Cardiac septum (tissue), 1 donor: ENCODE measurements at regions of chr14 and their contacts with region 1.

Region 1: DNA sequence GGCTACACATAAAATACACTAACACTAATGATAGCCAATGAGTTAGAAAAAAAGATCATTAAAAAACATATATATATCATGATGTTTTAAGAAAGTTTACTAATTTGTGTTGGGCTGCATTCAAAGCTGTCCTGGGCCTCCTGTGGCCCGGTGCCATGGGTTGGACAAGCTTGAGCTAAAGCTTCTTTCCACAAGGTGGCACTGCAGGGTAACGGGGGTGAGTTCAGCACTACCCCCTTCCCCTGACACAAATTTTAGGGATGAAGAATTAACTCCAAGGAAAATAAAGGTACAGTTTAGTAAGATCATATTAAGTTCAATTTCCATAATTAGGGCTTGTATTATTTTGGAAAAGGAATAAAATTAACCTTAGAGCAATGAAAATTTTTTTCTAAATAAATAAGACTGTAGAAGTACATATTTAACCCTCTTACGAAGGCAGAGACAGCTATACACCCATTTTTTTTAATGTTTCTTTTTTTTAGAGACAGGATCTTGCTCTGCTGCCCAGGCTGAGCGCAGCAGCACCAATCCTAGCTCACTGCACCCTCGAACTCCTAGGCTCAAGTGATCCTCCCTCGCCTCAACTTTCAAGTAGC is 38.9 kb downstream of the PPP1R13B start:
- DNase-seq: peak; percentile 81

Region 2: DNA sequence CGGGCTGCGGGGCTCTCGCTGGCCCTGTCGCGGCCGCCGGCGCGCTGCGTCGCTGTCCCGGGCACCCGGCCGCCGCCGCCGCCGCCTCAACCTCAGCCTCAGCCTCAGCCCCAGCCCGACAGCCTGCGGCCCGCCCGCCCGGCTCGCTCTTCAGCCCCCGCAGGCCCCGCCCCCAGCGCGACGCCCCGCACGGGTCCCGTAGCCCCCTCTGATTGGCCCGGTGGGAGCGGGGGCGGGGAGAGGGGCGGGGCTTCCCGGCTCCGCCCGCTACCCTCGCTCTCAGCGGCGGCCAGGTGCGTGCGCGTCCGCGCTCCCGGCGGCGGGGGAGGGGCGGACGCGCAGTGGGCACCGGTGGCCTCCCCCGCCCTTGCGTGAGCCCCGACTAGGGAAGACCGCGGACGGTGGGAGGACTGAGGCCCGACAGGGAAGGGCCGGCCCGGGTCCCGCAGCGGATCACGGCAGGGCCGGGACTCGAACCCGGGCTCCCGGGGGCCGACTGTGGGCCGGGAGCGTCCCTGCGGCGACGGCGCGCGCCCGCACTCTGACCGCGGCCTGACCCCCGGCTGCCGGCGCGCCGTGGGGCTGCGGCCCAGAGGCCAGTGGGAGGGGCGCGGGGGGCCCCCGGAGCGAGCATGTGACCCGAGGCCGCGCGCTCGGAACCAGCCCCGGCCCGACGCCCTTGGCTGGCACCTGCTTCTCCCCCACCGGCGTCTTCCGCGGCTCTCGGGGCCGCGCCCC is 39.1 kb after region 1 on chr14 and contains the start of gene PPP1R13B:
- intact Hi-C with region 1: loop called (anchors 5 kb)
- DNase-seq: peak; percentile 96
- total RNA-seq, gene PPP1R13B: 67.8 TPM

Region 3: DNA sequence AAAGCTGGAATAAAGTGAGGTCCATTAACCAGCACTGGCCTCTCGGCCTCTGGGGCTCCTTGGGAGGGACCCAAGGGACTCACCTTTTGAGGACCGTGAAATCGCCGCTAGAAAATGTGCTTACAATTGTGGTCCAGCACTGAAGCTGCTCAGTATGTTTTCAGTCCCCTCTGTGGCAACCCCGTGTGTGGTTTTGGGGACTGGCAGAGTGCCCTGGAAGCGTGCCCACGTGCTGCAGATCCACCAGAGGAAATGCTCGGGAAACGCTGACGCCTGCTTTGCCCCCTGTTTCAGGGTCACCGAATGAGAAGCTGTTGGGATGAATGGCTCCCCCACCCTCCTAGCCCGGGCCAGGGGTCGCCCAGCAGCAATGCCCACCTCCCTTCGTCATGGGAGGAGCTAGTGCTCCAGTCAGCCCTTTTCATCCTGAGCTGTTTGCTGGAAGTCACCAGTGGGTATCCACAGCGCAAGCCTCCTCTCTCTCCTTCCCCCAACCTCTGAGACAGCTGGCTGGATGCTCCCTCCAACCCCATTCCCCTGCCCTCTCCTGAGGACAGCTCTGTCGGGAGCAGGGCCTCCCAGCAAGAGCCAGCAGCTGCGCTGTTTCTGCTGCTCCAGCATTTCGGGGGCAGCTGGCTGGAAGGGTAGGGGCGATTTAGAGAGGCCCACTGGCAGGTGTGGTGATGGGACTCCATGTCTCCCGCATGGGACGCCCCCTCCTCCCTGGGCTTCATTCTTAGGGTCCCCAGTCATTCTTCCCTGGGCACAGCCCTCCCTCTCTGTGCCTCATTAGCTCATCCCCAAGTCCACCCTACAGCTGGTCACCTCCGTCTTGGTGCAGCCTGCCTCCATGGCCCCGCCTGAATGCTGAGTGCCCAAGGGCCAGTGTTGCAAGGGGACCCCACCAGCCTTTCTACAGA is 72.1 kb after region 1 on chr14:
- intact Hi-C with region 1: loop called (anchors 2 kb)
- DNase-seq: no peak

Region 4: DNA sequence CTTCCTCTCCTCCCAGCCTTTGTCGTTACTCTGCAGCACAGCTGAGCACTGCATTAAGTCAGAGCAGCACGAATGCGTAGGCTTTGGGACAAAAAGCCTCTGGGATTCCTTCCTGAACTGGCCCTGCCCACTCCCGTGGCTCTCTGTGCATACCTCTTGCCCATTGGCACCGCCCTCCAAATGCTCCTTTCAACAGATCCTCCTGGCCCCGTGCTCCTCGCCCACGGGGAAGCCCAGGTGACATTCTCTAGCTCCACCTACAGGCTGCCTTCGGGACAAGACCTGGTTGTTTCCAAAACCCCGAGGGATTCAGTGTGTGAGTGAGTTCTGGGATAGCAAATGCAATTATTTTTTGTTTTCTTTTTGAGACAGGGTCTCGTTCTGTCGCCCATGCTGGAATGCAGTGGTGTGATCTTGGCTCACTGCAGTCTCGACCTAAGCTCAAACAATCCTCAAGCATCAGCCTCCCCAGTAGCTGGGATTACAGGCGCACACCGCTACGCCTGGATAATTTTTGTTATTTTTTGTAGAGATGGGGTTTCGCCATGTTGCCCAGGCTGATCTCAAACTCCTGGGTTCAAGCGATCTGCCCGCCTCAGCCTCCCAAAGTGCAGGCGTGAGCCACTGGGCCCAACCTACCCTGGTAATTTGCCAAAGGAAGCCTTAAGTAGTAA is 101.9 kb after region 1 on chr14:
- intact Hi-C with region 1: loop called (anchors 1 kb)
- DNase-seq: peak; percentile 90

Region 5: GRCh38 chr14:103984196-103984595 is 175.7 kb after region 1 on chr14:
- intact Hi-C with region 1: loop called (anchors 5 kb)
- DNase-seq: no peak

Region 6: GRCh38 chr14:104306068-104307010 is 497.8 kb after region 1 on chr14:
- intact Hi-C with region 1: no loop called
- DNase-seq: peak; percentile 53